ENCODE measurements at regions of chr10 and their contacts with region 1.

Region 1: GRCh38 chr10:31808258-31809218 is 120.1 kb downstream of the ARHGAP12 start:
- DNase-seq: no peak
- H3K4me3 ChIP-seq: peak overlapping the region; percentile 20 to 49
- H3K27ac ChIP-seq: peak overlapping the region; percentile 38 to 66
- H3K4me1 ChIP-seq: no peaks in the 10 kb centered on the region
- H3K27me3 ChIP-seq: no peaks in the 10 kb centered on the region
- CTCF ChIP-seq: peak; percentile 49 to 66 (median 60)

Region 2: DNA sequence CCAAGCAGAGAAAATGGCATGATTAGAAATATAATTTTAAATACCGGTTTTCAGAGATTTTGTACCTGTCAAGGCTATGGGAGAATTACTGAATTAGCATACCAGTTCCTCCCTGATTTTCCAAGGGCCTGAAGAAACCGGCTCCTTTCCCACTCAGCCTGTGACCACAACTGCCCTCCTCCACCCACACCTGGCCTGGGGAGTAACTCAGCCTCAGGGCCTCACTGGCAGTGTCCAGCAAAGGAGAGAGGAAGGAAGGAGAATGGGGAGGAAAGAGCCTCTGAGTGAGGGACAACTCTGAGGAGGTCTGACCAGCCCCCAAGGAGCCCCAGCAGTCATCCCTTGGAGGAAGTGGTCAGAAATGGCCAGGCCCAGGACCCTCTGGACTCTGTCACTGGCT is 1081.0 kb before region 1 on chr10:
- intact Hi-C with region 1: loop called (anchors 2 kb)
- DNase-seq: no peak
- H3K4me3 ChIP-seq: no peak overlapping the region
- H3K27ac ChIP-seq: no peak overlapping the region
- H3K4me1 ChIP-seq: peaks cover 0 to 2% of the 10 kb centered on the region in 2 donors
- H3K27me3 ChIP-seq: no peaks in the 10 kb centered on the region
- CTCF ChIP-seq: no peak

Region 3: GRCh38 chr10:31526681-31527080 is 281.9 kb before region 1 on chr10:
- intact Hi-C with region 1: loop called (anchors 10 kb)
- DNase-seq: no peak
- H3K4me3 ChIP-seq: no peak overlapping the region
- H3K27ac ChIP-seq: no peak overlapping the region
- H3K4me1 ChIP-seq: no peaks in the 10 kb centered on the region
- H3K27me3 ChIP-seq: no peaks in the 10 kb centered on the region
- CTCF ChIP-seq: no peak

Region 4: GRCh38 chr10:31709028-31709427 is 99.5 kb before region 1 on chr10:
- intact Hi-C with region 1: loop called (anchors 1 kb)
- DNase-seq: no peak
- H3K4me3 ChIP-seq: no peak overlapping the region
- H3K27ac ChIP-seq: peak overlapping the region; percentile 71 to 78
- H3K4me1 ChIP-seq: peaks cover 11 to 15% of the 10 kb centered on the region in 2 donors
- H3K27me3 ChIP-seq: no peaks in the 10 kb centered on the region
- CTCF ChIP-seq: peak in 2 of 3 experiments; percentile 14 to 41

Region 5: DNA sequence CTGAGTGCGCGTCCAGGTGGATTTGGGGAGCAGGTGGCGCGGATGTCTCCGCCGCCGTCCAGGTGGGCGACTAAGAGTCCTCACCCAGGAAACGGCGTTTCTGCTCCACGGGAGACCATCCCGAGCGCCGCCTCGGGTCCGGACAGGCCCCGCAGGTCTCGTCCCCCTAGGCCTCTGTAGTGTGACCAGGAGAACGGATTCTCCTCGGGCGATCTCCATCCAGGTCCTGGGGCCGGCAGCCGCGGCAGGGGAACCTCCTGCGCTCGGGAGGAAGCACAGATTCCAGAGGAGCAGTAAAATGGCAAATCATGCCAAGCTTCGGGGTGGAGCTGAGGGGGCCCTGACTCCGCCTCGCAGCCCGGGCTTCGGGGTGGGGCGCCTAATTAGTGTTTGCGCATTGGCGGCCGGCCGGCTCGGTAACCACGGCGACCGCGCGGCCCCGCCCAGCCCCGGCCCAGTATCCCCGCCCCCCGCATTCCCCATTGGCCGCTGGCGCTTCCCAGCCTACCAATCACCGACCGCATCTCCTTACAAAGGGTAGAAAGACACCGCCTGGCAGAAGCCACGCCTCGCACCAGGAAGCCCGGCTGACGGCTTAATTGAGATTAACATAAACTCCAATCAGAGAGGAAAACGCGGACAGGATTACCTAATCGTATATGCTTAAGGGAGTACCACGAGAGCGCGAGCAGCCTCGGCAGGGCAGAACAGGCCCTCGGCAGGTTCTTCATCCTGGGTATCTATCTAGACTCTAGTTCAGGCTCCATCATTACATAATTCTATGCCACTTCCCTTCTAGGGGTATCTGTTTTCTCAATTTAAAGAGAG is 48.5 kb before region 1 on chr10:
- intact Hi-C with region 1: loop called (anchors 5 kb)
- DNase-seq: peak; percentile 95 to 98
- H3K4me3 ChIP-seq: peak overlapping the region; percentile 81 to 84
- H3K27ac ChIP-seq: peak overlapping the region; percentile 92 to 98
- H3K4me1 ChIP-seq: peaks cover 9 to 18% of the 10 kb centered on the region in 2 donors
- H3K27me3 ChIP-seq: no peaks in the 10 kb centered on the region
- CTCF ChIP-seq: no peak

Region 6: GRCh38 chr10:32771217-32771616 is 962.7 kb after region 1 on chr10:
- intact Hi-C with region 1: no loop called
- DNase-seq: no peak
- H3K4me3 ChIP-seq: no peak overlapping the region
- H3K27ac ChIP-seq: no peak overlapping the region
- H3K4me1 ChIP-seq: no peaks in the 10 kb centered on the region
- H3K27me3 ChIP-seq: no peaks in the 10 kb centered on the region
- CTCF ChIP-seq: no peak